Right cardiac atrium (tissue), 5 donors: ENCODE measurements at regions of chr7 and their contacts with region 1.

Region 1: GRCh38 chr7:131107337-131108211 is 220.1 kb upstream of the MKLN1 start:
- DNase-seq: peak; percentile 71 to 87 (median 83)
- ATAC-seq: peak; percentile 54 to 55
- H3K4me3 ChIP-seq: peak overlapping the region; percentile 63
- H3K27ac ChIP-seq: peak overlapping the region; percentile 96
- H3K4me1 ChIP-seq: no peaks in the 10 kb centered on the region
- H3K27me3 ChIP-seq: no peaks in the 10 kb centered on the region

Region 2: GRCh38 chr7:131071786-131072504 is 35.6 kb before region 1 on chr7:
- intact Hi-C with region 1: loop called in 1 of 4 experiments (anchors 5 kb)
- DNase-seq: peak; percentile 68 to 80 (median 73)
- ATAC-seq: peak; percentile 66 to 89
- H3K4me3 ChIP-seq: peak overlapping the region; percentile 38
- H3K27ac ChIP-seq: peak overlapping the region; percentile 67
- H3K4me1 ChIP-seq: peaks cover 16% of the 10 kb centered on the region
- H3K27me3 ChIP-seq: no peaks in the 10 kb centered on the region

Region 3: DNA sequence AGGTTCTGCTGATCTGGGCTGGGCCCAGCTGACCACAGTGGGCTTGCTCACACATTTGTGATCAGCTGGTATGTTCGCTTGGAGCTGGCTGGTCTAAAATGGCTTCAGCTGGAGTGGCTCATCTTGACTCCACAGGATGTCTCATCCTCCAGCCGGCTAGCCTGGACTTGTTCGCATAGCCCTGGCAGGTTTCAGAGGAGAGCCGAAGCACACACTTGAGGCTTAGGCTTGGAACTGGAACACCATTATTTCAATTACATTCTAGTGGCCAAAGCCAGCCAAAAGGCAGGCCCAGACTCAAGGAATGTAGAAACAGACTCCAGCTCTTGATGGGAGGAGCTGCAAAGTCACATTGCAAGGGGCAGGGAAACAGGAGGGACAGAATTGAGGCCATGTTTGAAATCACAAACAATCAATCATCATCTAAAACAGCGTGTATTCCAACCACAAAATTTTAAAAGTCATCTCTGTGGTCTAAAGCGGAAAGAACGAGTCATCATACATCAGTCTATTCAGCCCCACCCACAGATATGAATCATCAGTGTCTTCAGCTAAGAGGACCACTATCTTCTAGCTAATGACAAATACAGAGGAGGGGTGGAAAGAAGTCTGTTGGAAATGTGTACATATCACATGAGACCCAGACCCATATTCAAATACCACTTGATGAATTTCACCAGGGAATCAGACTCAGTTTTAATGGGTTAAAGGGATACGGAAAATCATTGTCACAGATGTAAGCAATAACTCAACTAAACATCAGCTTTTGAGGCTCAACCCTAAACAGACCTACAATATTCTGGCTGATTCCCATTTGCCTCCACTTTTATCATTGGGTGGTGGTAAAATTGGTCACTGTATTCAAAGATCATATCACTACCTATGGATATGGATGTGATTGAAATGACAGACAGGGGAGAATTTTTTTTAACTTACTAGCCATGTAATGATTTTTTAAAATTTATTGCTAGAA is 81.1 kb after region 1 on chr7:
- intact Hi-C with region 1: loop called in 1 of 4 experiments (anchors 10 kb)
- DNase-seq: no peak
- ATAC-seq: peak in 1 of 2 donors; percentile 31
- H3K4me3 ChIP-seq: no peak overlapping the region
- H3K27ac ChIP-seq: peak overlapping the region; percentile 70
- H3K4me1 ChIP-seq: peaks cover 8% of the 10 kb centered on the region
- H3K27me3 ChIP-seq: no peaks in the 10 kb centered on the region

Region 4: DNA sequence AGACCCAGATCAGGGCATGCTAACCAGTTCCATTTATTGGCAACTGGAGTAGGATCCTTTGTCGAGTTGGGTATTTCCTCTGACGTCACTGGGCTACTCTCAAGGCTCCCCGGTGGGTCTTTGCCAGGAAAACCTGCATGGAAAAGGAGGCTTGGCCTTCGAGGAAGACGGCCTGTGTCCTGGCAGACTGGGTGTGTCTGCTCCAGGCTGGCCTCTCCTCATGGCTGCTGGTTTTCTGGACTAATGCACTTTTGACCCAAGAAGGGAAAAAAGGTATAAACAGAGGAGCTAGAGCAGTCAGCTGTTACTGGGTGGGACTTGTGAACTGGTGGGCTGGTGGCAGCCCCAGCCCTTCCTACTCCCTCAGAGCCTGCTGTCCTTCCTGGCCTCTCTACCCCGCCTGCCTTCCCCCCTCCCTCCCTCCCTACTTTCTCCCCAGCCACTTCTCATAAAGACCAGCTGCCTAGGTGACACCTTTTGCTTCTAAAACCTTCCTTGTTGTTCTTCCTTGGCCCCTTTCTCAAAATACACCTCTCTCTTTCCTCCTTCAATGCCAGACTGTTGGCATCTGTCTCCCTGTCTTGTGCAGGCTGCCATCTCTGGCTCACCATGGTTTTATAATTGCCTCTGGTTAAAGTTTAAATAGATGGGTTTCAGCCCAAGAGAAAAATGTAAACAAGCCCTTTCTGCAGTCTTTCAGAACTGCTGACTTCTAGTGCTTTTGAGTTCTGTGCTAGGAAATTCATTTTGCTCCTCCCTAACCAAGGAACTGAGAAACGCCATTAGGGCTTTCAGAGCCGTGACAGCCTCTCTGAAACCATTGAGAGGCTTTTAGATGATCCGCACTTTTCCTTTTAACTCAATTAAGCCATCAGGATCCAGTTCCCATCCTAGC is 118.3 kb after region 1 on chr7:
- intact Hi-C with region 1: loop called in 1 of 4 experiments (anchors 10 kb)
- DNase-seq: peak; percentile 72 to 83 (median 79)
- ATAC-seq: peak; percentile 82 to 98
- H3K4me3 ChIP-seq: no peak overlapping the region
- H3K27ac ChIP-seq: peak overlapping the region; percentile 39
- H3K4me1 ChIP-seq: peaks cover 4% of the 10 kb centered on the region
- H3K27me3 ChIP-seq: no peaks in the 10 kb centered on the region

Region 5: DNA sequence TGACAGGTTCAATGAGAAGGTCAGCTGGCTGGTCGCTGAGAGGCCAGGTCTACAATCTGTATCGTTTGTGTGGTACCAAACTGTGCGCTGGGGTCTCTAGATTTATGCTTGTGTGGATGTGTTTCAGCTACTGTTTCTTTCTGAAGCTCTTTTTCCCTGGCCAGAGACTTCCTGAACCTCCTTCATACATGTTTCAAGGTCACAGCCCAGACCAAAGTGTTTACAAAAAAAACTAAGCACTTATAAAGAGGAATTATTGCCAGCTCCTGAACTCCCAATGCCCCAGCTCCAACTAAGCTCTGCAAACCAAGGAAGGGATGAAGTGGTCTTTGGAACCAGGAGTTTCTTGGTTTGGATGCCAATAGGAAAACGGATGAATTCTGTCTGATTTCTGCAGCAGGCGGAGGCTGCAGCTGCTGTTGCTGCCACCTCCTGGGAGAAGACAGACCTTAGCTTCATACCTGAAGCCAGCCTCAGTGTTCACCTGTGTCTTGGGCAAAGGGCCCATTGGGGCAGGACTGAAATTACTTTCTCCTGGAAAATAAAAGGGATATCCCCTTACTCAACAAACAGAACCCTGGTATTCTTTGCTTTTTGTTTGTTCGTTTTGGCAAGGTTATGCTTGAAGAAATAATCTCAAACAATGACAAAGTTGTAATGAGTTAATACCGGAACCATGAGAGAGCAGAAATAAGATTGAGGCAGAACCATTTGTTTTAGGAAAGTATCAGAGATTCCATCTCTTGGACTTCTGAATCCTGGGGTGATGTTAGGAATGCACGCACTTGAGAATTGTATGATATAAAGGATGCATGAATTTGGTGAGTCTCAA is 195.5 kb after region 1 on chr7:
- intact Hi-C with region 1: loop called in 1 of 4 experiments (anchors 10 kb)
- DNase-seq: peak in 1 of 3 donors; percentile 65
- ATAC-seq: peak; percentile 52 to 57
- H3K4me3 ChIP-seq: no peak overlapping the region
- H3K27ac ChIP-seq: peak overlapping the region; percentile 72
- H3K4me1 ChIP-seq: peaks cover 9% of the 10 kb centered on the region
- H3K27me3 ChIP-seq: no peaks in the 10 kb centered on the region

Region 6: GRCh38 chr7:131327626-131328376 is 220.2 kb after region 1 on chr7 and contains the start of gene MKLN1:
- intact Hi-C with region 1: loop called in 2 of 4 experiments (anchors 10 kb)
- DNase-seq: peak; percentile 94 to 98 (median 97)
- ATAC-seq: peak; percentile 99
- H3K4me3 ChIP-seq: peak within 1 kb of the TSS; percentile 84
- H3K27ac ChIP-seq: peak within 1 kb of the TSS; percentile 99
- H3K4me1 ChIP-seq: peaks cover 6% of the 10 kb centered on the region
- H3K27me3 ChIP-seq: no peaks in the 10 kb centered on the region
- total RNA-seq, gene MKLN1: 49.0 to 54.8 (median 53.1) TPM

Region 7: GRCh38 chr7:131424219-131424822 is 316.7 kb after region 1 on chr7:
- intact Hi-C with region 1: loop called in 1 of 4 experiments (anchors 10 kb)
- DNase-seq: no peak
- ATAC-seq: peak; percentile 44 to 62
- H3K4me3 ChIP-seq: no peak overlapping the region
- H3K27ac ChIP-seq: peak overlapping the region; percentile 19
- H3K4me1 ChIP-seq: peaks cover 2% of the 10 kb centered on the region
- H3K27me3 ChIP-seq: no peaks in the 10 kb centered on the region